CD8-positive, alpha-beta T cell (primary cell): ENCODE measurements at regions of chr1 and their contacts with region 1.

Region 1: GRCh38 chr1:62508187-62508758 is 71.4 kb downstream of the USP1 start:
- DNase-seq: peak in 3 of 9 experiments; percentile 5 to 54 (median 39)
- ATAC-seq: no peak
- H3K4me3 ChIP-seq: no peak overlapping the region
- H3K4me3 Mint-ChIP-seq: no peak overlapping the region
- H3K27ac ChIP-seq: no peak overlapping the region
- H3K27ac Mint-ChIP-seq: no peak overlapping the region
- H3K4me1 ChIP-seq: no peaks in the 10 kb centered on the region
- H3K4me1 Mint-ChIP-seq: no peaks in the 10 kb centered on the region
- H3K27me3 ChIP-seq: no peaks in the 10 kb centered on the region
- H3K27me3 Mint-ChIP-seq: no peaks in the 10 kb centered on the region
- CTCF ChIP-seq: peak; percentile 62

Region 2: GRCh38 chr1:62493656-62494055 is 14.6 kb before region 1 on chr1:
- CTCF ChIA-PET with region 1: interaction called, 6 read pairs
- POLR2A ChIA-PET with region 1: no interaction called
- intact Hi-C with region 1: loop called in 1 of 2 experiments (anchors 1 kb)
- DNase-seq: no peak
- ATAC-seq: no peak
- H3K4me3 ChIP-seq: no peak overlapping the region
- H3K4me3 Mint-ChIP-seq: no peak overlapping the region
- H3K27ac ChIP-seq: no peak overlapping the region
- H3K27ac Mint-ChIP-seq: no peak overlapping the region
- H3K4me1 ChIP-seq: no peaks in the 10 kb centered on the region
- H3K4me1 Mint-ChIP-seq: no peaks in the 10 kb centered on the region
- H3K27me3 ChIP-seq: no peaks in the 10 kb centered on the region
- H3K27me3 Mint-ChIP-seq: no peaks in the 10 kb centered on the region
- CTCF ChIP-seq: no peak

Region 3: DNA sequence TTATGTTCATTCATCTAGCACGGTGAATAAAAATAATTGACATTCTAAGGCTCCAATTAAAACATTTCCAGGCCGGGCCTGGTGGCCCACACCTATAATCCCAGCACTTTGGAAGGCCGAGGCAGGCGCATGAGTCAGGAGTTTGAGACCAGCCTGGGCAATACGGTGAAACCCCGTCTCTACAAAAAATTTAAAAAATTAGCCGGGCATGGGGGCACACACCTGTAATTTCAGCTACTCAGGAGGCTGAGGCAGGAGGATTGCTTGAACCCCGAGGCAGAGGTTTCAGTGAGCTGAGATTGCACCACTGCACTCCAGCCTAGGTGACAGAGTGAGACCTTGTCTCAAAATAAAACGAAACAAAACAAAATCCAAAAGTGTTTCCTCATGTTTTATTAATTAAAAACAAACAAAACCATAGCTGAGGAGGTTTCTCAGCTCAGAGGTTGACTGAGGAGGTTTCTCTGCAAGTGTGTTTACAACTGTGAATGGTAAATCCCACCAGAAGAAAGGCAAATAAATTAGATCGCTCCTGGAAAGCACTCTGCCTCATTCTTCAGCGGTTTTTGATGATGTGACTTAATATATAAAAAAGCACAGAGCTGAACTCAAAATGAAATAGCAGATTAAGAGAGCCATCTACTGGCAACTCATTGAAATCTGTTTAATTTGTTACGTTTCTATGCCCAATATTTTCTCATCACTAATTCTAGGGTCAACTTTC is 238.0 kb after region 1 on chr1:
- CTCF ChIA-PET with region 1: interaction called, 57 read pairs
- POLR2A ChIA-PET with region 1: interaction called, 4 read pairs
- intact Hi-C with region 1: loop called (anchors 1 kb)
- DNase-seq: peak in 2 of 9 experiments; percentile 44 to 59
- ATAC-seq: no peak
- H3K4me3 ChIP-seq: no peak overlapping the region
- H3K4me3 Mint-ChIP-seq: no peak overlapping the region
- H3K27ac ChIP-seq: no peak overlapping the region
- H3K27ac Mint-ChIP-seq: no peak overlapping the region
- H3K4me1 ChIP-seq: no peaks in the 10 kb centered on the region
- H3K4me1 Mint-ChIP-seq: no peaks in the 10 kb centered on the region
- H3K27me3 ChIP-seq: no peaks in the 10 kb centered on the region
- H3K27me3 Mint-ChIP-seq: peaks cover 5% of the 10 kb centered on the region
- CTCF ChIP-seq: peak; percentile 70